ENCODE measurements at regions of chr15 and their contacts with region 1.

Region 1: DNA sequence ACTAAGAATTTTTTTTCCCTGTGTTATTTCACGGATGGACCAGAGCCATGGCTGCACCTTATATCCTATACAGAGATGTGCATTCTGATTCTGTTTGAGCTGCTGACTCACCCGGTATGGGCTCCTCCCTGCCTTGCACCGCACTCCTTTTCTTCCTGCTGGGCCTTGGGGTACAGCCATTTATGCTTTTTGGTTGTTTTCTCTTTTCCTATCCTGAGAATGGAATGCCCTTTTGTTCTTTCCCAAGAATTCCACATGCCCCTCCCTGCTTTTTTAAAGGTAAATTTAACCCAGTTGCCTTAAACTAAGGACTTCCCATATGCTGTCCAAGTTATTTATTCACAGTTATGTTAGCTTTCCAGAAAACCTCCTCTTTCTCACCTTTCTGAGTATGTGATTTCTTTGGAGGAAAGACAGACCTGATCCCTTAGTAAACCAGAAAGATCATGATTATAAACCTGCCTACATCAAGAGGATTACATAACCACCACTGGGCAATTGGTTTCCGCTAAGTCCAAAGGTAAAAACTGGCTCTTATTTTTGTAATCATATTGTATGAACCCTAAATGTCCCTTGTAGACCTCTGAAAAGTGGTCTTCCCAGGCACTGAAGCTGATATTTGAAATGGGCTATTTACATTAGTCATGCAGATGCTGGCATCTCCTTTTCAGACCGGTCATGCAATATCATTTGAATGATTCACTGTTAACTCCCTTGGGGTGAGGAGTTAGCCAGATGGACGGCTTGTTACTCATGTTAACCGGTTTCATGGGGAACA is 45.5 kb downstream of the TMOD3 start:
- DNase-seq: no peak
- H3K4me3 ChIP-seq: no peak overlapping the region
- H3K27ac ChIP-seq: no peak overlapping the region
- H3K4me1 ChIP-seq: no peaks in the 10 kb centered on the region; a peak in 2 of 7 replicates
- H3K27me3 ChIP-seq: no peaks in the 10 kb centered on the region
- CTCF ChIP-seq: no peak
- EP300 ChIP-seq: no peak
- POLR2A ChIP-seq: no peak
- RAD21 ChIP-seq: no peak

Region 2: DNA sequence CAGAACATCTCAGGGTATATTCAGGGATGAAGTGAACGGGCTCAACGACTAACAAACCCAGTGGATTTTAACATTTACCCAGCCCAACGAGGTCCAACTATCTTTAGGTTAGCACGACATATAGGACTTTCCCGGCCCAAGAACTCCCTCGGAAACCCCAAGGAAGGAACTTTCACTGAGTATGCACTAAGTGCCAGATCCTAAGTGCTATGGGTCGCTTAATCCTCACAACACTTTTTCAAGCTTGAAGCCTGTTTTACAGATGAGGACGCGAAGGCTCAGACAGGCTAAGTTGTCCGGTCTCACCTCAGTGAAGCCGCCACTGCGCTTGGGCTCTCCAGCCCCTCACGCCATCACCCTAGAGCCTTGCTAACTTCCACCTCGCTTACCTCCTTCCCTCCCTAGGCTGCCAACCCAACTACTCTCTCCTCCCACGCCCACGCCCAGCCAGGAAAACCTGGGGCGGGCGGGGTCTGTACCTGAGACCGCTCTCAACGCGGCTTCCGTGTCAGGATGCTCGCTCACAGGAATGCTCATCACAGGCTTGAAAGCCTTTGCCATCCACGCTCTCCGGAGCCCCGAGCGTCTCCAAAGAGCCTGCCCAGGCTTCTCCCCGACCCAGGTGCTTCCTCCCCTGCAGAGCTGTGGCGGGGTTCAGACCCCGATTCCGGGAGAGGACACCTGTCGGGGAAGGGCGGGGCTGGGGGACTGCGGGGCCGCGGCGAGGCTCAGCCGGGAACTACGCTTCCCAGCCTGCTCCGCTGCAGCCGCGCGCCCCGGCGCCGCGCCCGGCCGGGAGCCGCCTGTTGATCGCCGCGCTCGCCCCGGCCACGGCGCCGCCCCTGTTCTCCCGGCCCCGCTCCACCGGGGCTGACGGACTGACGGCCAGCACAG is 123.9 kb before region 1 on chr15 and contains the start of gene TMOD2:
- CTCF ChIA-PET with region 1: no interaction called
- POLR2A ChIA-PET with region 1: no interaction called
- DNase-seq: peak in 1 of 2 experiments; percentile 85
- H3K4me3 ChIP-seq: peak within 1 kb of the TSS; percentile 54 to 75 (median 62)
- H3K27ac ChIP-seq: no peak within 1 kb of the TSS
- H3K4me1 ChIP-seq: peaks cover 0 to 3% (median 0%) of the 10 kb centered on the region in 4 experiments; a peak in 2 of 7 replicates
- H3K27me3 ChIP-seq: peaks cover 13 to 36% (median 25%) of the 10 kb centered on the region in 4 experiments
- CTCF ChIP-seq: no peak
- EP300 ChIP-seq: no peak
- POLR2A ChIP-seq: no peak
- RAD21 ChIP-seq: no peak
- total RNA-seq, gene TMOD2: 4.9 and 6.5 TPM in 2 replicates

Region 3: DNA sequence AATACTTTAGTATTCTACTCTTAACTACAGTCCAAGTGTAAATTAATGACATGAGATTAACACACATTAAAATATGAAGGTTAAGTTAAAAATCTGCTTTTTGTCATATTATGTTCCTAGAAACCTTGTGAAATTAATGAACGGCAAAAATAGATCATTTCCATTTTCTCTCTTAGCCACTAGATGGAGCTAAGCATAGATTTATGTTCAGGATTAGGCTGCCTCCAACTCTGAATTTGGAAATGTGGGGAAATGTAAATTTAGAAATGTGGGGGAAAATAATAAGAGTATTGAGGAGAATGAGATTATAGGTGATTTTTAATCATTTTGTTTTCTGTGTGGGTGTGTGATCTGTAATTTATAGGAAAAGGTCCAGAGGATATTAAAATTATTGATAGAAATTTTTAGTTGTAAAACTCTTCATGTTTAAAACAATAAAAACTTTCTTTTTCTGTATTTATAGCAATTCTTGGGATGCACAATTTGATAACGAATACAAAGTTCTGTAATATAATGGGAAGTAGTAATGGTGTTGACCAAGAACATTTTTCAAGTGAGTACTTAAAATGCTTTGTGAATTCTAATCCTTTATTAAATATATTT is 13.8 kb after region 1 on chr15:
- CTCF ChIA-PET with region 1: interaction called, 34 read pairs
- POLR2A ChIA-PET with region 1: interaction called, 3 read pairs
- DNase-seq: no peak
- H3K4me3 ChIP-seq: no peak overlapping the region
- H3K27ac ChIP-seq: no peak overlapping the region
- H3K4me1 ChIP-seq: no peaks in the 10 kb centered on the region
- H3K27me3 ChIP-seq: no peaks in the 10 kb centered on the region
- CTCF ChIP-seq: peak in 2 of 3 experiments; percentile 31 to 61; a peak in 2 of 4 replicates
- EP300 ChIP-seq: no peak
- POLR2A ChIP-seq: no peak
- RAD21 ChIP-seq: peak in 1 of 2 experiments; percentile 26; a peak in 3 of 4 replicates

Region 4: GRCh38 chr15:52523192-52523591 is 648.3 kb after region 1 on chr15:
- CTCF ChIA-PET with region 1: no interaction called
- POLR2A ChIA-PET with region 1: no interaction called
- DNase-seq: no peak
- H3K4me3 ChIP-seq: no peak overlapping the region
- H3K27ac ChIP-seq: no peak overlapping the region
- H3K4me1 ChIP-seq: peaks cover 0 to 4% (median 3%) of the 10 kb centered on the region in 4 experiments; a peak in 4 of 7 replicates
- H3K27me3 ChIP-seq: peaks cover 0 to 7% (median 4%) of the 10 kb centered on the region in 4 experiments; a peak in 4 of 7 replicates
- CTCF ChIP-seq: no peak
- EP300 ChIP-seq: no peak
- POLR2A ChIP-seq: no peak
- RAD21 ChIP-seq: no peak

Measured in H1 (cell line).